H1 (cell line): ENCODE measurements at regions of chr11 and their contacts with region 1.

Region 1: DNA sequence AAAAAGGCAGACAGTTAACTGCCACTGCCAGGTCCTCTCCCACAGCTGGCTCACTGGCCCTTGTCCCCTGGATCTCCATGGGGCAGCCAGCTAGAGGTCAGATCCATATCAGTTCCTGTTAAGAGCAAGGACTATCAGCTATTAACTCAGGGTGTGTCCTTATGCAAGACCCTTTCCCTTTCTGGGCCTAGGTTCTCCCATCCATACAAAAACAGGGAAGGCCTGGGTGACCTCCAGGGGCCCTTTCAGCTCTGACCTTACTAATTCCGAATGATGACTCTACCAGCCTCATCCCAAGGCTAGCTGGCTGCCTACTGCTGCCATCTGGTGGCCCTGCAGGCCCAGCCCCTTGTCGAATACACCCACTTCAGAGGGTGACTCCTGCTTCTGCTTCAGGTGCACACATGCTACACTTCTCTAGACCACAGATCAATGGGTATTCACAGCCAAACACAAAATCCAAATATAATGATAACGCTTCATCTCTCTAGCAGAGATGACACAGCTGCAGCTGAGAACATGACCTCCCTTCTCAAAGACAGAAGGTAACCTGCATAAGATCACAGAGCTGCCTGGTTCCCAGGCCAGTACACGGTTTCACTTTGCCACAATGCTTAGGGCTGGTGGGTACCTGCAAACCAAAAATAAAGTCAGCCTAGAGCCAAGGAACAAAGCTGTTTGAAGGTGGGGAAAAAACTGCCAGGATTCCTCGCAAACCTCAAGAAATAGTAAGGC is 34.1 kb downstream of the SERGEF start:
- DNase-seq: peak in 1 of 2 experiments; percentile 71
- H3K4me3 ChIP-seq: no peak overlapping the region
- H3K27ac ChIP-seq: no peak overlapping the region
- H3K4me1 ChIP-seq: no peaks in the 10 kb centered on the region
- H3K27me3 ChIP-seq: no peaks in the 10 kb centered on the region
- CTCF ChIP-seq: peak; percentile 91 to 97 (median 94)
- EP300 ChIP-seq: no peak
- POLR2A ChIP-seq: no peak
- RAD21 ChIP-seq: peak; percentile 77 to 79

Region 2: DNA sequence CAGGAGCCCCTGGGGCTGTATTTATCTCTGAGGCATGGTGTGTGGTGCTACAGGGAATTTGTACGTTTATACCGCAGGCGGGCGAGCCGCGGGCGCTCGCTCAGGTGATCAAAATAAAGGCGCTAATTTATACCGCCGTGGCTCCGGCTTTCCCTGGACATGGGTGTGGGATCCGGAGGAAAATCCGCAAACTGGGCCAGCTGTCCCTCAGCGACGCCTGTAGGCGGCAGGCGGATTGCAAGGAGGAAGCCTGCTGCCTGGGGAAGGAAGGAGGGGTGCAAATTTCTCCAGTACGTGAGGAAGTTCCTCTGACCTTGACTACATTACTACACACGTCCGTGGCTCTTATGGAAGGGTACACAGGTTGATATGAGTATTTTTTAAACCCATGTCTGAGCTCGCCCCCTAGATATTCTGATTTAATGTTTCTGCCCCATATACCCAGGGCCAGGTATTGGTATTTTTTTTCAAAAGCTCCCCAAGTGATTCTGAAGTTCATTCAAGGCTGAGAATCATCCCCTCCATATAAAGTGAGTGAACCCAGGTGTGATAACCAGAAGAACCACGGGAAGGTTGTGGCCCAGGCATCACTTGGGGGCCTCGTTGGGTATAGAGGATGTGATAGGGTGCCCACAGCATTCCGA is 256.6 kb before region 1 on chr11:
- CTCF ChIA-PET with region 1: interaction called, 10 read pairs
- POLR2A ChIA-PET with region 1: no interaction called
- DNase-seq: peak in 1 of 2 experiments; percentile 65
- H3K4me3 ChIP-seq: peak overlapping the region in 1 of 4 experiments; percentile 56; a peak in 2 of 8 replicates
- H3K27ac ChIP-seq: no peak overlapping the region
- H3K4me1 ChIP-seq: peaks cover 0 to 31% (median 14%) of the 10 kb centered on the region in 4 experiments; a peak in 6 of 7 replicates
- H3K27me3 ChIP-seq: peaks cover 52 to 72% (median 60%) of the 10 kb centered on the region in 4 experiments
- CTCF ChIP-seq: peak; percentile 76 to 90 (median 77)
- EP300 ChIP-seq: no peak
- POLR2A ChIP-seq: no peak
- RAD21 ChIP-seq: peak; percentile 62 to 72

Region 3: GRCh38 chr11:17750013-17750800 is 228.5 kb before region 1 on chr11:
- CTCF ChIA-PET with region 1: interaction called, 16 read pairs
- POLR2A ChIA-PET with region 1: no interaction called
- DNase-seq: no peak
- H3K4me3 ChIP-seq: no peak overlapping the region
- H3K27ac ChIP-seq: no peak overlapping the region
- H3K4me1 ChIP-seq: no peaks in the 10 kb centered on the region
- H3K27me3 ChIP-seq: no peaks in the 10 kb centered on the region
- CTCF ChIP-seq: no peak
- EP300 ChIP-seq: no peak
- POLR2A ChIP-seq: no peak
- RAD21 ChIP-seq: no peak

Region 4: DNA sequence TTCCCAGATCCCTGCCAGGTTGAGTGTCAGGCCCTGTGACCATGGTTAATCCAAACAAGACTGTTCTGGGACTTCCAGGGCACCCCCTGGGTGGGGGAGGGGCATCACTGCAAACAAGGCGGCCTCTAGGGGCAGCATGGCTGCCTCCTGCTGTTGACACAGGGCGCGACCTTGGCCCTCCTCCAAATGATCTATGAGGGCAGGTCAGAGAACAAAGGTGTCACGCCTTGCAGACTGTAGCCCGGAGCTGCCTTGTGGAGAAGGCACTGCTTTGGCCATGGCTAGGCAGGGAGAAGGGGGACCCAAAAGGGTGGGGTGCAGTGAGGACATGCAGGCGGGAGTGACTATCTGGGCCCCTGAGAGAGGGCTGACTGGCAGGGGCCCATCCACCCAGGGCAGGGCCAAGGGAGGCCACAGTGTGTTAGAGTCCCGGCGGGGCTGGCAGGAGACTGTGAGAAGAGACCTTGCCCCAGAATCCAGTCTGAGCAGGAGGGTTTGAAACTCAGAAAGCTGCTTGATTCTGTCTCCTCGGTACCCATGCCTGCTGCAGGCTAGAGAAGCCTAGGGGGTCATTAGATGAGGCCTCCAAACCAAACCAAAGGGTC is 208.6 kb before region 1 on chr11:
- CTCF ChIA-PET with region 1: interaction called, 11 read pairs
- POLR2A ChIA-PET with region 1: no interaction called
- DNase-seq: no peak
- H3K4me3 ChIP-seq: no peak overlapping the region
- H3K27ac ChIP-seq: no peak overlapping the region
- H3K4me1 ChIP-seq: peaks cover 0 to 4% (median 0%) of the 10 kb centered on the region in 4 experiments; a peak in 2 of 7 replicates
- H3K27me3 ChIP-seq: no peaks in the 10 kb centered on the region
- CTCF ChIP-seq: peak; percentile 34 to 44 (median 43)
- EP300 ChIP-seq: no peak
- POLR2A ChIP-seq: no peak
- RAD21 ChIP-seq: peak; percentile 10 to 25; a peak in 1 of 4 replicates

Region 5: GRCh38 chr11:17827006-17827405 is 151.7 kb before region 1 on chr11:
- CTCF ChIA-PET with region 1: interaction called, 16 read pairs
- POLR2A ChIA-PET with region 1: no interaction called
- DNase-seq: no peak
- H3K4me3 ChIP-seq: no peak overlapping the region
- H3K27ac ChIP-seq: no peak overlapping the region
- H3K4me1 ChIP-seq: 0 out of 7 replicates have a peak, but pooled peaks cover 0 to 2% (median 0%) of the 10 kb centered on the region in 4 experiments
- H3K27me3 ChIP-seq: no peaks in the 10 kb centered on the region
- CTCF ChIP-seq: peak in 2 of 3 experiments; percentile 64 to 72; a peak in 3 of 4 replicates
- EP300 ChIP-seq: no peak
- POLR2A ChIP-seq: no peak
- RAD21 ChIP-seq: peak; percentile 72 to 84

Region 6: DNA sequence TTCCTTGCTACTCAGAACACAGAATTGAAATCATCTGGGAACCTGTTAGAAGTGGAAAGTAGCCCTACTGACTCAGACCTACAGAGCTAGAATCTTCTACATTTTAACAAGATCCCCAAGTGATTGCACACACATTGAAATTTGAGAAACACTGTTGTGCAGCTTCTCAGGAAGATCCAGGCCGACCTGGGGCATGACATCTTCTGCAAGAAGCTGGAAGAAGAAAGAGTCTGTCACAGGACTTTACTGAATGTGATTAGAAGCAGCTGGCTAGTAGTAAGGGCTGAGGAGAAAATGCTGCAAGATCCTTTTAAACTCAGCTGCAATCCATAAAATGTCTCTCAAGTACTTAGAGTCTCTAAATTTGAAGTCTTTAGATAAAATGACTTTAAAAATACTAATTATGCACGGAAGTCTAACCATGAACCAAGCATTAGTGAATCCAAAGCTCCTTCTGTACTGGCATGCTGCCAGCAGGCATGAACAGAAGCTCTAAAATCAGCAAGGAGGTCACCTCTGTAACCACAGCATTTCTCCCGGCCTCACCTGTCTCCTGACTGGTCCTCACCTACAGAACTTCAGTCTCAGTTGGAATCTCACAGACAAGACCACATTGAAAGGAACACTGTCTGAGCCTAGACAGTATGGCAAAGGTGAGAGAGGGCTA is 50.9 kb before region 1 on chr11:
- CTCF ChIA-PET with region 1: interaction called, 18 read pairs
- POLR2A ChIA-PET with region 1: no interaction called
- DNase-seq: no peak
- H3K4me3 ChIP-seq: no peak overlapping the region
- H3K27ac ChIP-seq: no peak overlapping the region
- H3K4me1 ChIP-seq: peaks cover 0 to 8% (median 2%) of the 10 kb centered on the region in 4 experiments; a peak in 2 of 7 replicates
- H3K27me3 ChIP-seq: no peaks in the 10 kb centered on the region
- CTCF ChIP-seq: no peak
- EP300 ChIP-seq: no peak
- POLR2A ChIP-seq: no peak
- RAD21 ChIP-seq: no peak

Region 7: GRCh38 chr11:17967661-17968060 is 11.1 kb before region 1 on chr11:
- CTCF ChIA-PET with region 1: interaction called, 97 read pairs
- POLR2A ChIA-PET with region 1: no interaction called
- DNase-seq: no peak
- H3K4me3 ChIP-seq: no peak overlapping the region
- H3K27ac ChIP-seq: no peak overlapping the region
- H3K4me1 ChIP-seq: no peaks in the 10 kb centered on the region
- H3K27me3 ChIP-seq: no peaks in the 10 kb centered on the region
- CTCF ChIP-seq: no peak
- EP300 ChIP-seq: no peak
- POLR2A ChIP-seq: no peak
- RAD21 ChIP-seq: no peak